ENCODE measurements at regions of chr5 and their contacts with region 1.

Region 1: GRCh38 chr5:69042915-69043658 is 50.7 kb upstream of the SLC30A5 start:
- DNase-seq: peak; percentile 66
- ATAC-seq: peak; percentile 85
- H3K4me3 Mint-ChIP-seq: peak overlapping the region; percentile 68
- H3K27ac Mint-ChIP-seq: no peak overlapping the region; the same call in 1 of the 2 replicates
- H3K4me1 Mint-ChIP-seq: peaks cover 4% of the 10 kb centered on the region; the same call in 1 of the 2 replicates
- H3K27me3 Mint-ChIP-seq: no peaks in the 10 kb centered on the region; the same call in 1 of the 2 replicates
- CTCF ChIP-seq: peak; percentile 90

Region 2: GRCh38 chr5:68711293-68712200 is 331.5 kb before region 1 on chr5:
- CTCF ChIA-PET with region 1: no interaction called
- POLR2A ChIA-PET with region 1: no interaction called
- DNase-seq: no peak
- ATAC-seq: no peak
- H3K4me3 Mint-ChIP-seq: no peak overlapping the region
- H3K27ac Mint-ChIP-seq: no peak overlapping the region
- H3K4me1 Mint-ChIP-seq: peaks cover 6% of the 10 kb centered on the region; the same call in 1 of the 2 replicates
- H3K27me3 Mint-ChIP-seq: no peaks in the 10 kb centered on the region; the same call in 1 of the 2 replicates
- CTCF ChIP-seq: no peak

Region 3: DNA sequence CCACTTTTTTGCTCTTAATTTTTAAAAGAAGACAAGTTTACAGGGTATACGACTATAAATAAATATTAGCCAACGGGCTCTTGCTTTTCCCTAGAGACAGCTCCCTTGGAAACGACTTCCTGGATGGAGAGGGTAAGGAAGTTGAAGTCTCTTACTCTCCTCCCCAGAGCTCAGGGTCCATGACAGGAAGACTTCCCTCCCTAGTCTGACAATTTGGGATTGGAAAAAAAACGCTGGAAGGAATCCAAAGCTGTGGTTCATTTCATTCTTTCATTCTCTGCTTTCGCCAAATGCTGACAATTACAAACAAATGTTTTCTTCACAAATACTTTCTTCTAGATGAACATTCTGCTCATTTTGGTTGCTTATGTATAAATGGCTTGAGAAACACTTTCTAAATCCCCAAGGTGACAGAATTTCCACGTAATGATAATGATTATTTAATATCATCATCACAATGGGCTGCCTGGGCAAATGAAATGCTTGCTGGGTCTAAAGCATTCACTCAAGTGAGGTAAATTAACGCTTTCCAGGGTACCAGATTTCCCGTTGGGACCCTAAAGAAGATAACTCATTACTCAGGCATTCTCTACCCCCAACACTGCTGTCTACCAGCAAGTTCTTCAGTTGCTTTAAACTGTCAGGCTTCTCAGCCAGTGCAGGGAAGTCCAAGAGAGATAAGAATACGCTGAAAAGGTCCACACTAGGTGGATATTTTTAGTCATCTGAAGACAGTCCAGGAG is 89.0 kb before region 1 on chr5:
- CTCF ChIA-PET with region 1: no interaction called
- POLR2A ChIA-PET with region 1: no interaction called
- DNase-seq: no peak
- ATAC-seq: no peak
- H3K4me3 Mint-ChIP-seq: no peak overlapping the region
- H3K27ac Mint-ChIP-seq: no peak overlapping the region
- H3K4me1 Mint-ChIP-seq: peaks cover 28% of the 10 kb centered on the region
- H3K27me3 Mint-ChIP-seq: peaks cover 4% of the 10 kb centered on the region; the same call in 1 of the 2 replicates
- CTCF ChIP-seq: no peak

Region 4: GRCh38 chr5:69032009-69032408 is 11.1 kb before region 1 on chr5:
- CTCF ChIA-PET with region 1: interaction called, 10 read pairs
- POLR2A ChIA-PET with region 1: no interaction called
- DNase-seq: no peak
- ATAC-seq: peak; percentile 81
- H3K4me3 Mint-ChIP-seq: no peak overlapping the region
- H3K27ac Mint-ChIP-seq: no peak overlapping the region
- H3K4me1 Mint-ChIP-seq: no peaks in the 10 kb centered on the region
- H3K27me3 Mint-ChIP-seq: no peaks in the 10 kb centered on the region; the same call in 1 of the 2 replicates
- CTCF ChIP-seq: no peak

Region 5: DNA sequence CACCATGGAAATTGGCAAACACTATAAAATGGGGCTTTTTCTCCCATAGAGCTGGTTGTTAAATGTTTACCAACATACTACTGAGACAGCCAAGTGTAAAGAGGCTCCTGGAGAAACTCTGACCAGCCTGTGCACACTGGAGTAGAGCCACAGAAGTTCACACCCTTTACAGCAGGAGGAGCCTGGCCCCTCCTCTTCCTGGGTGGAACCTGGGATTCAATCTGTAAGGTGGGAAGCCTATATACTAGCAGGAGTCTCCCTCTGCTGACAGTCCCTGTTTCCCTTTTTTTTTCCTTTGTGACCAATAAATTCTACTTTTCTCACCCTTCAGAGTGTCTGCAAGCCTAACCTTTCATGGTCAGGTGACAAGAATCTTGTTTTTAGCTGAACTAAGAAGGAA is 40.3 kb after region 1 on chr5:
- CTCF ChIA-PET with region 1: interaction called, 10 read pairs
- POLR2A ChIA-PET with region 1: no interaction called
- DNase-seq: peak; percentile 35
- ATAC-seq: peak; percentile 100
- H3K4me3 Mint-ChIP-seq: no peak overlapping the region
- H3K27ac Mint-ChIP-seq: no peak overlapping the region
- H3K4me1 Mint-ChIP-seq: peaks cover 4% of the 10 kb centered on the region
- H3K27me3 Mint-ChIP-seq: no peaks in the 10 kb centered on the region
- CTCF ChIP-seq: no peak

Region 6: DNA sequence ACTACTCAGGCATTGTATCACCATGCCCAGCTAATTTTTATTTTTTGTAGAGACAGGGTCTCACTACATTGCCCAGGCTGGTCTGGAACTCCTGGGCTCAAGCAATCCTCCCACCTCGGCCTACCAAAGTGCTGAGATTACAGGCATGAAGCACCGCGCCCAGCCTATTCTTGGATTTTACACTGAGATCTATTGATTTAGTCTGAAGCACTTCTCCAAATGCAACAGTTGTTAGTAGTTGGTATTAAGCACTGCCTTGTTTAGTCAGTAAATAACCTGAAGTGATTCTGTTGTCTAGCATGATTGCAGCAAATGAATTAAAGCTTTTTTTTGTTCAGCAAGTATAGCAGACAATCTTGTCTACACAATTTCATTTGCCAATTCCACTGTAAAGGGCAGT is 115.0 kb after region 1 on chr5:
- CTCF ChIA-PET with region 1: no interaction called
- POLR2A ChIA-PET with region 1: no interaction called
- DNase-seq: no peak
- ATAC-seq: no peak
- H3K4me3 Mint-ChIP-seq: no peak overlapping the region
- H3K27ac Mint-ChIP-seq: peak overlapping the region; percentile 36; the same call in 1 of the 2 replicates
- H3K4me1 Mint-ChIP-seq: no peaks in the 10 kb centered on the region
- H3K27me3 Mint-ChIP-seq: no peaks in the 10 kb centered on the region
- CTCF ChIP-seq: no peak